A549 (cell line): ENCODE measurements at regions of chr7 and their contacts with region 1.

Region 1: DNA sequence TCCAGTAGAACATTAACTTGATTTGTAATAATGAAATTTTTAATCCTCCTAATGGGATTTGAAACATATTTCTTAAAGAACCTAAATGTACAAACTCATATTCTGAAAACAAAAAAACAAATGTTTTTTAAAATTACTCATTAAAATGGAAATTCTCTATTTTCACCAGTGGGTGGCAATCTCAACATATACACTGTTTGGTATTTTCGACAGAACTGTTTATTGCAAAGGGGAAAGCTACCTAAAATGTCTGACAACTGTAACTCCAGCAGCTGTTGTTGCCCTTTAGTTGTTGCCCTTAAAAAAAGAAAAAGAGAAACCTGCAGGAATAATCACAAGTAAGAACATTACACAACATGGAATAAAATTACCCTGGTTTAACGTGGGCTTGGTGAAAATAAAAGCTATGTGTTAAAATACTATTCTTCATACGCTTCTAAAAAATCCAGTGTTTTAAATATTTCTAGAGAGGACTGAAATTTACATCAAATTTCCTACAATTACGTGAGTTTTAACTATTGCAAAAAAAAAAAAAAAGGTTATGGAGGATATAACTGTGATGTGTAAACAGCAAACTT is 54.5 kb downstream of the COL1A2 start:
- DNase-seq: peak; percentile 28 to 57
- ATAC-seq: 0 out of 6 replicates have a peak, but pooled peaks of 1 of the 2 experiments have one; percentile 36
- H3K4me3 ChIP-seq: no peak overlapping the region
- H3K27ac ChIP-seq: no peak overlapping the region
- H3K4me1 ChIP-seq: no peaks in the 10 kb centered on the region
- CTCF ChIP-seq: peak; percentile 77
- EP300 ChIP-seq: no peak
- POLR2A ChIP-seq: no peak
- RAD21 ChIP-seq: peak; percentile 85 to 91

Region 2: DNA sequence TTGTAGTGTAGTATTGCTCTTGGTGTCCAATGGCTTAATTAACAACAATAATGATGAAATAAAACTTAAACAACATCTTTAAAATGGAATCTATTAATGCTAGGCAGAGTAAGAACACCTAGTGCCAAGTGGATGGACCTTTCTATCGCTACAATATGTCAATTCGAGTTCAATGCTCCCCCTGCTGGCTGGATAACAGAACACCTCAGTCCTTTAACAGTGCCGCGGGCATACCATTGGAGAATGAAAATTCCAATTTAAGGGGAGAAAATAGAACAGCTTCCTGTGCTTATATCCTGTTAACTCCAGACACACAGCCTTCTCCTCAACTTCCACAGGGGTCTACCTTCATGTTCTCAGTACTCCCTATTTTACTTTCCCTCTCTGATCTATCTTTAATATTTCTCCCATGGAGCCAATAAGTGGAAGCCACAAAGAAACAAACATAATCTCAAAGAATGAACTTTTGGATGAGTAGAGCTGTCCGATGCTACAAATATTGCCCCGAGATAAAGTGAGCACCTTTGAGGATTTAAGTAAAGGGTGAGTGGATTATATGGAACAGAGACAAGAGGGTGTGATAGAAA is 13.1 kb before region 1 on chr7:
- CTCF ChIA-PET with region 1: interaction called, 39 read pairs
- POLR2A ChIA-PET with region 1: no interaction called
- DNase-seq: peak; percentile 59 to 76
- ATAC-seq: peak; percentile 94 to 97; a peak in 5 of 6 replicates
- H3K4me3 ChIP-seq: no peak overlapping the region
- H3K27ac ChIP-seq: 0 out of 6 replicates have a peak overlapping the region, but pooled peaks of 1 of the 2 experiments have one; percentile 45
- H3K4me1 ChIP-seq: peaks cover 10% of the 10 kb centered on the region; the same call in 1 of the 3 replicates
- CTCF ChIP-seq: peak; percentile 90
- EP300 ChIP-seq: no peak
- POLR2A ChIP-seq: no peak
- RAD21 ChIP-seq: peak; percentile 87

Region 3: GRCh38 chr7:95199779-95200558 is 750.7 kb after region 1 on chr7:
- CTCF ChIA-PET with region 1: interaction called, 19 read pairs
- POLR2A ChIA-PET with region 1: no interaction called
- DNase-seq: peak; percentile 40 to 80
- ATAC-seq: peak; percentile 92 to 98
- H3K4me3 ChIP-seq: no peak overlapping the region
- H3K27ac ChIP-seq: peak overlapping the region; percentile 4 to 53; a peak in 2 of 6 replicates
- H3K4me1 ChIP-seq: peaks cover 25% of the 10 kb centered on the region
- CTCF ChIP-seq: peak; percentile 89
- EP300 ChIP-seq: no peak
- POLR2A ChIP-seq: no peak
- RAD21 ChIP-seq: peak; percentile 92 to 93

Region 4: GRCh38 chr7:95396136-95397032 is 947.1 kb after region 1 on chr7 and contains the start of gene PON3:
- CTCF ChIA-PET with region 1: interaction called, 13 read pairs
- POLR2A ChIA-PET with region 1: no interaction called
- DNase-seq: peak; percentile 89 to 91
- ATAC-seq: peak; percentile 89 to 90
- H3K4me3 ChIP-seq: peak within 1 kb of the TSS; percentile 62
- H3K27ac ChIP-seq: peak within 1 kb of the TSS; percentile 90 to 97
- H3K4me1 ChIP-seq: peaks cover 56% of the 10 kb centered on the region
- CTCF ChIP-seq: peak; percentile 83
- EP300 ChIP-seq: no peak
- POLR2A ChIP-seq: peak; percentile 36; the same call in 1 of the 2 replicates
- RAD21 ChIP-seq: peak; percentile 65 to 68
- polyA plus RNA-seq, gene PON3: 142 and 161 TPM in 2 replicates